ENCODE measurements at regions of chr13 and their contacts with region 1.

Region 1: GRCh38 chr13:101757446-101758039 is 305.1 kb downstream of the ITGBL1 start:
- DNase-seq: no peak
- H3K4me3 ChIP-seq: no peak overlapping the region
- H3K27ac ChIP-seq: no peak overlapping the region
- H3K4me1 ChIP-seq: no peaks in the 10 kb centered on the region
- H3K27me3 ChIP-seq: no peaks in the 10 kb centered on the region
- CTCF ChIP-seq: peak; percentile 55 to 73

Region 2: GRCh38 chr13:101144808-101145419 is 612.6 kb before region 1 on chr13:
- intact Hi-C with region 1: loop called (anchors 5 kb)
- DNase-seq: no peak
- H3K4me3 ChIP-seq: no peak overlapping the region
- H3K27ac ChIP-seq: no peak overlapping the region
- H3K4me1 ChIP-seq: peaks cover 0 to 4% (median 0%) of the 10 kb centered on the region in 4 donors
- H3K27me3 ChIP-seq: no peaks in the 10 kb centered on the region
- CTCF ChIP-seq: peak; percentile 75 to 82

Region 3: DNA sequence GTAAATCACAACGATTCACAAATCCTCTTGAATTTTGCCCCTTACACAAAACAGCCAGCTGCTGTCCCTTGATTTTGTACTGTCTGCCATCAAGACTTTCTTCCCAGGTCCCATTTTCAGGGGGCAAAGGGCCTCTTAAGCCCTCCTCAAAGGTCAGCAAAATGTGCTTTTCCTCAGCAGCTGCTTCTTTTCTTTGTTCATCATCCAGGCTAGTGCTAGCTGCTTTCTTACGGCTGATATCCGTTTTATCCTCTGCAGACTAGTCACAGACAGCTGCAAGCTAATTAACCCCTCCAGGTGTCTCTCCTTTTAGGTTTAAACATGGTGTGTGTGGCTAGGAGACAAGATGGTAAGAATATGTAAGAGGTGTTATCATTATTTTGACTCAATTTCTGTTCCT is 432.1 kb before region 1 on chr13:
- intact Hi-C with region 1: no loop called
- DNase-seq: no peak
- H3K4me3 ChIP-seq: no peak overlapping the region
- H3K27ac ChIP-seq: no peak overlapping the region
- H3K4me1 ChIP-seq: peaks cover 0 to 14% (median 0%) of the 10 kb centered on the region in 4 donors
- H3K27me3 ChIP-seq: no peaks in the 10 kb centered on the region
- CTCF ChIP-seq: no peak

Region 4: DNA sequence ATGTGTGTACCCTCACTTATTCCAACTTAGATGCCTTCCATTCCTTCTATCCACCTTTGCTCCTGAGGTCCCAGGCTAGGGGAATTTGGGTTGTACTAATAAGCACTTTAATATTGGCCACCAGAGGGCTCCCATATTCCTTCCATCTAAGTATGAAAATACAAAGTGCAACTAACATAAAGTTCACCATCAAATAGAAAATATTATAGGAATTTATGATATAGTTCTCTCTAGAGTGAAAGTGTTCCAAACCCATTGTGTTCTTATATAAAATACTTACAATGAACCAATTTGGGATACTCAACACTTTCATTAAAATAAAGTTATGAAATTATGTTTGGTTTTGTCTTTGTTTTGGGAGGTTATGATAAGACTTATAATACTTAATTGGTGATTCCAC is 242.8 kb before region 1 on chr13:
- intact Hi-C with region 1: loop called (anchors 5 kb)
- DNase-seq: peak in 1 of 2 donors; percentile 33
- H3K4me3 ChIP-seq: no peak overlapping the region
- H3K27ac ChIP-seq: peak overlapping the region in 1 of 2 donors; percentile 17
- H3K4me1 ChIP-seq: peaks cover 0 to 22% (median 0%) of the 10 kb centered on the region in 4 donors
- H3K27me3 ChIP-seq: no peaks in the 10 kb centered on the region
- CTCF ChIP-seq: peak; percentile 55 to 78